ENCODE measurements at regions of chr9 and their contacts with region 1.

Region 1: DNA sequence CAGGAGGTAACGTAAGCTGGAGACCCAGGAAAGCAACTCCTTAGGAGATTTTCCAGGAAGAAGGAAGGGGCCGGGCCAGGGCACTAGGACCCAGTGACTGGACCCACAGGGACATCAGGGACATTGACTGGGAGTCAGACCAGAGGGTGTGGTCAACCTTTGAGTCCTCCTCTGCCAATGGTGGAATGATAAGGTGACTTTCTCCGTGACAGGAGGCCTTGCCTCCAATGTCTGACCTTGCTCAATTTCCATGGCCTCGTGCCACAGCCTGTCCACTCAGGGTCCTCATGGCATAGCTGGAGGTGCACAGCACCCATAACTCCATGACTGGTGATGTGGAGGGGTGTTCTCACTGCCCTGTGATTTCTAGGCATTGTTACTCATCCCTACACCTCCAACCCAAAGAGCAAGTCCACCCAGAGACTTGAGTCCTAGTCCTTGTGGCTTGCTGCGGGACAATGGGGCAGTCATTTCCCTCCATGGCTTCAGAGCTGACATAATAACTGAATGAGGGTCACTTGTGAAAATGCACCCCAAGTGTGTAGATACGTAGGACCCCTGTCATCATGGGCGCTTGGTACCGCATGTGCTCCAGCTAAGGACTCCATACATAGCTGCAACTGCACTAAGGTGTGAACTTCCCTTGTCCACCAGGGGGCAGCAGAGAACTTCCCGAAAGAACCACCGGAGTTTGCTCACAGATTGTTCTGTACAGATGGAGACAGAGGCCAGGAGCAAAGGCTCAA is 4.1 kb upstream of the AMBP start:
- DNase-seq: peak; percentile 42 to 79 (median 67)
- ATAC-seq: peak; percentile 75
- H3K4me3 ChIP-seq: no peak overlapping the region
- H3K4me3 Mint-ChIP-seq: no peak overlapping the region
- H3K27ac ChIP-seq: no peak overlapping the region
- H3K27ac Mint-ChIP-seq: no peak overlapping the region
- H3K4me1 ChIP-seq: no peaks in the 10 kb centered on the region
- H3K4me1 Mint-ChIP-seq: peaks cover 0 to 4% (median 0%) of the 10 kb centered on the region in 7 donors
- H3K27me3 ChIP-seq: no peaks in the 10 kb centered on the region
- H3K27me3 Mint-ChIP-seq: peaks cover 0 to 4% (median 3%) of the 10 kb centered on the region in 5 donors

Region 2: GRCh38 chr9:114304416-114305188 is 222.4 kb after region 1 on chr9:
- CTCF ChIA-PET with region 1: interaction called, 6 read pairs
- POLR2A ChIA-PET with region 1: no interaction called
- intact Hi-C with region 1: loop called in 1 of 2 experiments (anchors 1 kb)
- DNase-seq: peak in 1 of 9 donors; percentile 17
- ATAC-seq: no peak
- H3K4me3 ChIP-seq: no peak overlapping the region
- H3K4me3 Mint-ChIP-seq: no peak overlapping the region
- H3K27ac ChIP-seq: no peak overlapping the region
- H3K27ac Mint-ChIP-seq: no peak overlapping the region
- H3K4me1 ChIP-seq: no peaks in the 10 kb centered on the region
- H3K4me1 Mint-ChIP-seq: peaks cover 0 to 16% (median 4%) of the 10 kb centered on the region in 7 donors
- H3K27me3 ChIP-seq: no peaks in the 10 kb centered on the region
- H3K27me3 Mint-ChIP-seq: no peaks in the 10 kb centered on the region